GM10248 (cell line): ENCODE measurements at regions of chr10 and their contacts with region 1.

Region 1: GRCh38 chr10:118459726-118460193 is 117.6 kb upstream of the FAM204A start:
- DNase-seq: peak; percentile 53
- CTCF ChIP-seq: peak; percentile 70

Region 2: DNA sequence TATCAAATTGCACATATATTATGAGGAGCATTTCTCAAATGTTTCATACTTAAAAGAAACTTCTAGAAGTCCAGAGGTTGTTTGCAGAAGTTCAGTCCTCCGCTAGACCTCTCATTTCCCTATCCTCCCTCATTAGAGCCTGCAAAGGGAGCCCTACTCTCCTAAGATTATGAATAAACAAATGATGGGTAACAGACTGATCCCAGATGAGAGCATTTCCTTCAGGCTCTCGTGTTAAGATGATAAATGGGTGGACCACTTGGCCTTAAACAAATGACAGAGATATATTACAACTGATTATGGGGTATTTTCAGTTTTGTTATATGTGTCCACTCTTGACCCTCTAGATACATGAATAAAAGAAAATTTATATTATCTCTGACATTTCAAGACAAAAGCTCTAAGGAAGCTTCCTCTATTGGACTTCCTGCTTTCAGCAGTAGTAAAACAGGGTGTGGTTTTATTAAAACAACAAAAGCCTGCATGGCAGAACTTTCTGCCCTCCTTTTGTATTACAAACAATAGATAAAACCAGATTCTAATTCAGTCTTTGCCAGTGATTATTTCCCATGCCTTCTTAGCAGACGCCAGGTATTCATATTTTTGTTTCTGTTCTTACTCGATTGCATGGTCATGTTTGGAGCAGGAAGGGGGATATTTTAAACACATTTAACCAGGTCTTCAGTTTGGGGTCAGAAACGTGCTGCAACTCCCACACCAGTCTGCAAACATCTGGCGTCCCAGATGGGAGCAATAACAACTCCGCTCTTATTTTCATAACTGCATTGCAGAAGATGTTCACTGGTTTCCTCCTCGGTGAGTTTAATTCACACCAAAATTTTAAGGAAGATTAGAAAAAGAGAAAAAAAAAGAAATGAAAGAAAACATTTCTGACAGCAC is 65.2 kb before region 1 on chr10:
- CTCF ChIA-PET with region 1: no interaction called
- POLR2A ChIA-PET with region 1: no interaction called
- DNase-seq: no peak
- CTCF ChIP-seq: no peak

Region 3: GRCh38 chr10:118447478-118448270 is 12.1 kb before region 1 on chr10:
- CTCF ChIA-PET with region 1: interaction called, 47 read pairs
- POLR2A ChIA-PET with region 1: no interaction called
- DNase-seq: no peak
- CTCF ChIP-seq: no peak

Region 4: DNA sequence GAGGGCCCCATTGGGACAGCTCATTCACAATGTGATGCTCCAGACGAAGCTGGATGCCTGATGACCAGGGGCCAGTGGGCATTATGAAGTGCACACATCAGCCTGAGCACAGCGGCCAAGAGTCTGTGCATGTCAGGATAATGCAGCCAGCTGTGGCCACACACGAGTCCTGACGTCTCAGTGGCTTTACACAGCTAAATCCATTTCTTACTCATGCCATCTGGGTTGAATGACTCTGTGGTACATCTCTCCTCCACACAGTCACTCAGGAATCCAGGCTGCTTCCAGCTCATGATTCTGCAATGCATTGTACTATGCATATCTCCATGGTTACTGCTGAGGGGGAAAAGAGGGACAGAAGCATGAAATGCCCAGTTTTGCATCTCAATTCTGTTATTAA is 12.1 kb after region 1 on chr10:
- CTCF ChIA-PET with region 1: interaction called, 35 read pairs
- POLR2A ChIA-PET with region 1: no interaction called
- DNase-seq: no peak
- CTCF ChIP-seq: no peak

Region 5: DNA sequence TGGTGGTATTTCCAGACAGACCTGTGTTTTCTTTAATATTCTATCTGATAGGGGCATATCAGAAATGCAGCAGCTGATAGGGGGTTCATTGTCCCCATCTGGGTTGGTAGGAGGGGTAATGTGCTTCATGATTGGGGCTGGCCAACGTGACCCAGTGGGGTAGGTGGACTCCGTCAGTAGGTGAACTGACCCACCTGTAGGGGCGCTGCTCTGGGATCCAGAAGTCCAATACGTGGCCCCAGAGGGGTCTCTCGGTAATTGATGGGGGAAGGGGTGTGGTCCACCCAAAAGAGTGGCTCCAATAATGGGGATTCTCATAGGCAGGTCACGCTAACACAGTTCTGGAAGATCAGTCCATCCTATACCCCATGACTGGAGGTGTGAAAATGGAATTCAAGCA is 23.7 kb after region 1 on chr10:
- CTCF ChIA-PET with region 1: interaction called, 10 read pairs
- POLR2A ChIA-PET with region 1: no interaction called
- DNase-seq: no peak
- CTCF ChIP-seq: no peak